MCF 10A (cell line): ENCODE measurements at regions of chr6 and their contacts with region 1.

Region 1: DNA sequence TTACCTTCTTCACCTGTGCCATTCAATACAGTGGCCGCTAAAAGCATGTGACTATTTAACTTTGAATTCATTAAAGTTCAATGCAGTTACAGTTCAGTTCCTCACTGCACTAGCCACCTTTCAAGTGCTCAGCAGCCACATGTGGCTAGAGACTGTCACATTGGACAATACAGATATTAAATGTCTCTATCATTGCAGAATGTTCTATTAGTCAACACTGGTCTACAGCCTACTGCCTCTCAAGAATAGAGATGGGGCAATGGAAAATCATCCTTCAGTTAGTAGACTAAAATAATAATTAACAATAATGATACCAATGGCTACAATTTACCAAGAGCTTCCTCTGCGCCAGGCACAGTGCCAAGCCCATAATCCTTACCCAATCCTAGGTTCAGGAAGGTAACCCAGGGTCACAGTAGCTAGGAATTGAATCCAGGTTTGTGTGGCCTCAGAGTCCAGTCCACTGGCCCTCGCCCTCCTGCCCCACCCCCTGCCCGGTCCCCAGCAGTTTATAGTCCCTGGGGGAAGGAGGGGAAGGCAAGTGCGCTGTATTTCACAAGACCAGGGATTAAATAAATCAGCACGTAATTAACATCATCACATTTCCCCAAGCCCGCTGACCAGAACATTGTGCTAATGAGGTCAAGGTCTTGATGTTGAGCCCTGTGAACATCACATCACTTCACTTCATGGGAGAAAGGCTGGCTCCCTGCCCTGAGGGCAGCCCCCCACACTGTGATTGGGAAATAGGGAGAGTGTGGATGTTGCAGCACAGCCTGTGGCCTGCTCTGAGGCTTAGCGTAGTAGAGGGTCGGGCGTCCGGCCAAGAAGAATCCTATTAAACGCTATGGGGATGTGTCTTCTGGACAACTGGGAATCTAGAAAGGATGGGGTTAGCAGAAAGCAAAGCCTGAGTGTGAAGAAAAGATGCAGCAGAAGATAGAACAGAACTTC is 147.2 kb downstream of the VEGFA start:
- DNase-seq: peak; percentile 66
- H3K4me3 Mint-ChIP-seq: no peak overlapping the region
- H3K27ac Mint-ChIP-seq: no peak overlapping the region
- H3K4me1 Mint-ChIP-seq: no peaks in the 10 kb centered on the region
- H3K27me3 Mint-ChIP-seq: no peaks in the 10 kb centered on the region
- CTCF ChIP-seq: no peak

Region 2: GRCh38 chr6:43733471-43734293 is 183.5 kb before region 1 on chr6:
- CTCF ChIA-PET with region 1: no interaction called
- POLR2A ChIA-PET with region 1: no interaction called
- intact Hi-C with region 1: no loop called
- DNase-seq: peak; percentile 35
- H3K4me3 Mint-ChIP-seq: no peak overlapping the region
- H3K27ac Mint-ChIP-seq: no peak overlapping the region
- H3K4me1 Mint-ChIP-seq: peaks cover 25% of the 10 kb centered on the region
- H3K27me3 Mint-ChIP-seq: no peaks in the 10 kb centered on the region
- CTCF ChIP-seq: no peak

Region 3: GRCh38 chr6:43898358-43899131 is 18.7 kb before region 1 on chr6:
- CTCF ChIA-PET with region 1: interaction called, 10 read pairs
- POLR2A ChIA-PET with region 1: no interaction called
- intact Hi-C with region 1: no loop called
- DNase-seq: no peak
- H3K4me3 Mint-ChIP-seq: no peak overlapping the region
- H3K27ac Mint-ChIP-seq: no peak overlapping the region
- H3K4me1 Mint-ChIP-seq: no peaks in the 10 kb centered on the region
- H3K27me3 Mint-ChIP-seq: no peaks in the 10 kb centered on the region
- CTCF ChIP-seq: no peak

Region 4: GRCh38 chr6:43933148-43933885 is 16.1 kb after region 1 on chr6:
- CTCF ChIA-PET with region 1: no interaction called
- POLR2A ChIA-PET with region 1: no interaction called
- intact Hi-C with region 1: no loop called
- DNase-seq: no peak
- H3K4me3 Mint-ChIP-seq: no peak overlapping the region
- H3K27ac Mint-ChIP-seq: no peak overlapping the region
- H3K4me1 Mint-ChIP-seq: peaks cover 3% of the 10 kb centered on the region
- H3K27me3 Mint-ChIP-seq: no peaks in the 10 kb centered on the region
- CTCF ChIP-seq: no peak